CD4-positive, alpha-beta memory T cell (primary cell): ENCODE measurements at regions of chr5 and their contacts with region 1.

Region 1: GRCh38 chr5:132607095-132607494 is 50.3 kb downstream of the RAD50 start:
- DNase-seq: no peak
- H3K4me3 ChIP-seq: no peak overlapping the region
- H3K4me3 Mint-ChIP-seq: no peak overlapping the region
- H3K27ac ChIP-seq: no peak overlapping the region
- H3K27ac Mint-ChIP-seq: peak overlapping the region in 1 of 7 donors; percentile 15
- H3K4me1 ChIP-seq: no peaks in the 10 kb centered on the region
- H3K4me1 Mint-ChIP-seq: no peaks in the 10 kb centered on the region
- H3K27me3 ChIP-seq: no peaks in the 10 kb centered on the region
- H3K27me3 Mint-ChIP-seq: no peaks in the 10 kb centered on the region

Region 2: DNA sequence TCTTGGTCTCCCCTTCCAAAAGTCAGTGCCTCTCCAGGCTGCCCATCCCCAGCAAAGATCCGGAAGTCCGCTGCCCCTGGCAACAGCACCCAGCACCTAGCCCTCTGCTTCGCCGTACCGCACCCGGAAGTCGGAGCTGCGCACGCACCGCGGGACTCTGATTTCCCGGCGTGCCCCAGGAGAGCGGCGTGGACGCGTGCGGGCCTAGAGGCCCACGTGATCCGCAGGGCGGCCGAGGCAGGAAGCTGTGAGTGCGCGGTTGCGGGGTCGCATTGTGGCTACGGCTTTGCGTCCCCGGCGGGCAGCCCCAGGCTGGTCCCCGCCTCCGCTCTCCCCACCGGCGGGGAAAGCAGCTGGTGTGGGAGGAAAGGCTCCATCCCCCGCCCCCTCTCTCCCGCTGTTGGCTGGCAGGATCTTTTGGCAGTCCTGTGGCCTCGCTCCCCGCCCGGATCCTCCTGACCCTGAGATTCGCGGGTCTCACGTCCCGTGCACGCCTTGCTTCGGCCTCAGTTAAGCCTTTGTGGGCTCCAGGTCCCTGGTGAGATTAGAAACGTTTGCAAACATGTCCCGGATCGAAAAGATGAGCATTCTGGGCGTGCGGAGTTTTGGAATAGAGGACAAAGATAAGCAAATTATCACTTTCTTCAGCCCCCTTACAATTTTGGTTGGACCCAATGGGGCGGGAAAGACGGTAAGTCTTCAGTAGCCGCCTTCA is 50.2 kb before region 1 on chr5 and contains the start of gene RAD50:
- CTCF ChIA-PET with region 1: no interaction called
- POLR2A ChIA-PET with region 1: no interaction called
- intact Hi-C with region 1: loop called (anchors 1 kb)
- DNase-seq: peak; percentile 88 to 92 (median 90)
- H3K4me3 ChIP-seq: peak within 1 kb of the TSS; percentile 43 to 64
- H3K4me3 Mint-ChIP-seq: peak within 1 kb of the TSS; percentile 93 to 99 (median 96)
- H3K27ac ChIP-seq: peak within 1 kb of the TSS; percentile 69
- H3K27ac Mint-ChIP-seq: peak within 1 kb of the TSS; percentile 94 to 98 (median 96)
- H3K4me1 ChIP-seq: peaks cover 46% of the 10 kb centered on the region
- H3K4me1 Mint-ChIP-seq: peaks cover 18 to 35% (median 26%) of the 10 kb centered on the region in 4 donors
- H3K27me3 ChIP-seq: no peaks in the 10 kb centered on the region
- H3K27me3 Mint-ChIP-seq: no peaks in the 10 kb centered on the region
- total RNA-seq, gene RAD50: 33.3 to 35.0 TPM

Region 3: DNA sequence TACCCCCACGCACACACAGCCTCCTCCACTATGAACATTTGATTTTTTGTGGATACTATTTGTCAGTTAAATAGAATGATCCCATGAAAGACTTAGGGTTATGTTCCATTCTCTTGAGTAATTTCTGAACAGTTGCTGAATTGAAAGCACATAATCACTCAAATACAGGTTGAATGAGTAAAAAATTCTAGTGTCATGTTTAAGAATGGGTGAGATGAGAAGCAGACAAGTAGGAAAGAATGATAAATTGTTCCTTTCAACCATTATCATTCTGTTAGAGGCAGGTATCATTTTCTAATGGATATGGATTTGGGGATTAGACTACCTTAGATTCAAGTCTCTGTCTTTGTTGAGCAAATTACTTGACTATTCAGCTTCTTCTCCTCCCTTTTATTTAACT is 31.0 kb before region 1 on chr5:
- CTCF ChIA-PET with region 1: no interaction called
- POLR2A ChIA-PET with region 1: no interaction called
- intact Hi-C with region 1: no loop called
- DNase-seq: no peak
- H3K4me3 ChIP-seq: no peak overlapping the region
- H3K4me3 Mint-ChIP-seq: no peak overlapping the region
- H3K27ac ChIP-seq: no peak overlapping the region
- H3K27ac Mint-ChIP-seq: peak overlapping the region in 2 of 7 donors; percentile 4 to 27
- H3K4me1 ChIP-seq: no peaks in the 10 kb centered on the region
- H3K4me1 Mint-ChIP-seq: peaks cover 0 to 11% (median 2%) of the 10 kb centered on the region in 4 donors
- H3K27me3 ChIP-seq: no peaks in the 10 kb centered on the region
- H3K27me3 Mint-ChIP-seq: no peaks in the 10 kb centered on the region